Dendritic cell treated with granulocyte-macrophage colony-stimulating factor and Interleukin-4, amounts not matched to agents 40 ng/mL and 50 ng/mL, for 4 days (primary cell): ENCODE measurements at regions of chr10 and their contacts with region 1.

Region 1: DNA sequence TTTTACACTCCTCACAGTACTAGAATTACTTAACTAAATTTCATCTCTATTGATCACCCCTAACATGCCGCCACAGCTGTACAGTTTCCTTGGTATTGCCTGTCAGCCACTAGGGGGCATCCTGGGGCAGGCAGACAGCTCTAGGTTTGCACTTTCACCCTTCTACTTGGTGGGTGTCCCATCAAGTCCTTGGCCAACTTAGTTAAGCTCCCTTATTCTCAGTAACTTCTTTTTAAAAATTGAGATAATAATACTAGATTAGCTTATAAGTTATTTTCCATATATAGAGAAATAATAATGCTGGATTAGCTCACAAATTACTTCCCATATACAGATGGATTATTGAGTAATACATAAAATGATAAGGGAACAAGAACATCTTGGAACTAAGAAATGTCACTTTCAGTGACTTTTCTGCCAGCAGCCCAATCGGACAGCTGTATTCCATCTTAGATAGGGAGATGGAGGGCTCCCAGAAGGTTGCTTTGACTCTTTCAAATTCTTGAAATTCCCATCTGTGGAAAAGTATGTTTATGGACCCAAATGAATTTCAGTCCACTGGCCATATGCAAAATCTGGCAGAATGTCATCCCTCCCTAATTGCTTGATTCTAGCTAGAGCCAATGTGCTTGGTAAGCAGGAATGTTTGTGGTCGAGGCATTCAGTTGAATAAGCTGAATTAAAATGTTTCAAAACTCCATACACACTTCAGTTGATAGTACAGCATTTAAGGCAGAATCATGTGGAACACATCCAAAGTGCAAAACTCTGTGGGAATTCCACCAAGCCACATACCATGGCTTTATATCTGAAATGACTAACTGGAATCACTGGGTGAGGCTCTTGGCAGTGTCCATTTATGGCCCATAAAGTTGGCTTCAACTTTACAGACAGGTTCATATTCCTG is 309.7 kb downstream of the CSTF2T start:
- H3K4me3 Mint-ChIP-seq: no peak overlapping the region
- H3K27ac Mint-ChIP-seq: no peak overlapping the region
- H3K4me1 Mint-ChIP-seq: peaks cover 1% of the 10 kb centered on the region
- H3K27me3 Mint-ChIP-seq: no peaks in the 10 kb centered on the region

Region 2: GRCh38 chr10:51510231-51510630 is 120.6 kb after region 1 on chr10:
- intact Hi-C with region 1: no loop called
- H3K4me3 Mint-ChIP-seq: no peak overlapping the region
- H3K27ac Mint-ChIP-seq: no peak overlapping the region
- H3K4me1 Mint-ChIP-seq: no peaks in the 10 kb centered on the region
- H3K27me3 Mint-ChIP-seq: no peaks in the 10 kb centered on the region

Region 3: GRCh38 chr10:51960494-51960895 is 570.8 kb after region 1 on chr10:
- intact Hi-C with region 1: loop called (anchors 1 kb)
- H3K4me3 Mint-ChIP-seq: no peak overlapping the region
- H3K27ac Mint-ChIP-seq: no peak overlapping the region
- H3K4me1 Mint-ChIP-seq: no peaks in the 10 kb centered on the region
- H3K27me3 Mint-ChIP-seq: no peaks in the 10 kb centered on the region

Region 4: DNA sequence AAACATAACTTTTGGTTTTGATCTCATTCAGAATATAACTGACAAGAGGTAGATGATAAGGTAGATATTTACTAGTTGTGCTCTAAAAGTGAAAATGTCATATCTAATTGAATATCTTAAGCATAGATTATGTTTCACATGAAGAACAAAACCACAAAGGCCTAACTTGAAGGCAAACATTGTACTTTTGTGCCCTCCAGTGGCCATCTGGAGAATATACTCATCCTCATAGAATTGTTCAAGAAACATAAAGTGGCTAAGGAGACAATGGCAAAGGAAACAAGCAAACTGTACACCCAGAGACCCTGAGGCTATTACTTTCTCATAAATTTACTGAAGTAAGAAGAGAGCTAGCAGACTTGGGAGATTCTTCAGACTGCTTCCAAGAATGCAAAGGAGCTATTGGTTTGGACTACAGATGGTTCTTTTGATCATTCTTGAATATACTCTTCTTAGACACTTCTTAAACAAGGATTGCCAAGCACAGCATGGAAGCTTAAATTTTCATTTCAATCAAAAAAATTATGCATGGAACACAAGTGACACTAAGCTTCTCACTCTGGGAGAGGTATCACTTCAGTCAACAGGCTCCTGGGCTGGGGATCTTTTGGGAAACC is 826.2 kb after region 1 on chr10:
- intact Hi-C with region 1: loop called (anchors 5 kb)
- H3K4me3 Mint-ChIP-seq: no peak overlapping the region
- H3K27ac Mint-ChIP-seq: no peak overlapping the region
- H3K4me1 Mint-ChIP-seq: no peaks in the 10 kb centered on the region
- H3K27me3 Mint-ChIP-seq: no peaks in the 10 kb centered on the region